ENCODE measurements at regions of chr5 and their contacts with region 1.

Region 1: GRCh38 chr5:154940772-154941620 is at the start of gene MRPL22:
- DNase-seq: peak; percentile 84 to 94 (median 88)
- H3K4me3 ChIP-seq: peak within 1 kb of the TSS; percentile 54 to 96 (median 82)
- H3K27ac ChIP-seq: peak within 1 kb of the TSS; percentile 29 to 93 (median 82)
- H3K27me3 ChIP-seq: no peaks in the 10 kb centered on the region
- CTCF ChIP-seq: peak in 47 of 56 donors; percentile 5 to 64 (median 31)
- total RNA-seq, gene MRPL22: 21.8 to 47.2 (median 35.2) TPM

Region 2: GRCh38 chr5:154654486-154655371 is 286.3 kb before region 1 on chr5:
- intact Hi-C with region 1: loop called in 1 of 2 experiments (anchors 5 kb)
- DNase-seq: no peak
- H3K4me3 ChIP-seq: no peak overlapping the region
- H3K27ac ChIP-seq: peak overlapping the region in 1 of 59 donors; percentile 21
- H3K27me3 ChIP-seq: no peaks in the 10 kb centered on the region
- CTCF ChIP-seq: no peak

Region 3: GRCh38 chr5:154857530-154858296 is 83.3 kb before region 1 on chr5:
- intact Hi-C with region 1: loop called (anchors 2 to 5 kb)
- DNase-seq: peak; percentile 84 to 96 (median 94)
- H3K4me3 ChIP-seq: peak overlapping the region; percentile 55 to 92 (median 82)
- H3K27ac ChIP-seq: peak overlapping the region; percentile 73 to 100 (median 99)
- H3K27me3 ChIP-seq: no peaks in the 10 kb centered on the region
- CTCF ChIP-seq: peak in 33 of 56 donors; percentile 2 to 40 (median 27)

Region 4: GRCh38 chr5:155004138-155004744 is 63.2 kb after region 1 on chr5:
- intact Hi-C with region 1: loop called (anchors 2 to 10 kb)
- DNase-seq: peak in 1 of 10 donors; percentile 48
- H3K4me3 ChIP-seq: no peak overlapping the region
- H3K27ac ChIP-seq: no peak overlapping the region
- H3K27me3 ChIP-seq: no peaks in the 10 kb centered on the region
- CTCF ChIP-seq: peak in 53 of 56 donors; percentile 13 to 74 (median 49)

Region 5: DNA sequence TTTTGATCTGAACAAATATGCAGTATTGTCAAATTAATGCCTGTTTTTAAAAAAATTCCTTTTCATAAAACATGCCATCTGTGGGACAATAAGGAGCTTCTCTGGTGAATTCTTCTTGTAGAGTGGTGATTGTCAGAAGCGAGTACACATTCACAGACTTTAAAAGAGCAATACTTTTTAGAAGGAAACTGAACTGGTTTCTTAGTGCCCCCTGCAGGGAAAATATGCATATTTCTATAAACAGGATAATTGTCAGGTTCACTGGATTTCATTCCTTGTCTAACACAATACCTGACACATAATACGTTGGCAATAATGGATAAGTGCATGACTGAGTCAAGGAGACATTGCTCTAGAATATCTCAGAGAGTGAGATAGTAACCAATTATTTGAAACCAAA is 206.2 kb after region 1 on chr5:
- intact Hi-C with region 1: loop called in 1 of 2 experiments (anchors 10 kb)
- DNase-seq: no peak
- H3K4me3 ChIP-seq: no peak overlapping the region
- H3K27ac ChIP-seq: no peak overlapping the region
- H3K27me3 ChIP-seq: no peaks in the 10 kb centered on the region
- CTCF ChIP-seq: peak in 49 of 56 donors; percentile 18 to 64 (median 45)